SK-N-SH (cell line): ENCODE measurements at regions of chr10 and their contacts with region 1.

Region 1: DNA sequence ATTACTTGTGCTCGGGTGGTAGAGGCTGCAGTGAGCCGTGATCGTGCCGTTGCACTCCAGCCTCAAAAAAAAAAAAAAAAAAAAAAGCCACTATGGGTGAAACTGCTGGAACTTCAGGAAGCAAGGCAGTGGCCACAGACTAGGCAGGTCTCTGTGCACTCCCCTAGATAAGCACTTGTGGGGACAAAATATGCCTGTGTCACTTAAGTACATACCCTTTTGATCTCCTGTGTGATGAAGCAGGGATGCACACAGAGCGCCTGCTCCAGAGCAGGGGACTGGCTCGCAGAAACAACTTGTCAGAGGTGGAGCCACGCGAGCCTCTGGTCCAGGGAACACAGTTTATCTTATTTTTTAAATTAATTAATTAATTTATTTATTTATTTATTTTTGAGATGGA is 42.9 kb upstream of the PSAP start:
- DNase-seq: no peak
- H3K4me3 ChIP-seq: no peak overlapping the region
- H3K27ac ChIP-seq: no peak overlapping the region
- H3K4me1 ChIP-seq: peaks cover 0 to 3% of the 10 kb centered on the region in 2 experiments; a peak in 1 of 4 replicates
- H3K27me3 ChIP-seq: no peaks in the 10 kb centered on the region
- CTCF ChIP-seq: no peak
- EP300 ChIP-seq: no peak
- RAD21 ChIP-seq: no peak

Region 2: DNA sequence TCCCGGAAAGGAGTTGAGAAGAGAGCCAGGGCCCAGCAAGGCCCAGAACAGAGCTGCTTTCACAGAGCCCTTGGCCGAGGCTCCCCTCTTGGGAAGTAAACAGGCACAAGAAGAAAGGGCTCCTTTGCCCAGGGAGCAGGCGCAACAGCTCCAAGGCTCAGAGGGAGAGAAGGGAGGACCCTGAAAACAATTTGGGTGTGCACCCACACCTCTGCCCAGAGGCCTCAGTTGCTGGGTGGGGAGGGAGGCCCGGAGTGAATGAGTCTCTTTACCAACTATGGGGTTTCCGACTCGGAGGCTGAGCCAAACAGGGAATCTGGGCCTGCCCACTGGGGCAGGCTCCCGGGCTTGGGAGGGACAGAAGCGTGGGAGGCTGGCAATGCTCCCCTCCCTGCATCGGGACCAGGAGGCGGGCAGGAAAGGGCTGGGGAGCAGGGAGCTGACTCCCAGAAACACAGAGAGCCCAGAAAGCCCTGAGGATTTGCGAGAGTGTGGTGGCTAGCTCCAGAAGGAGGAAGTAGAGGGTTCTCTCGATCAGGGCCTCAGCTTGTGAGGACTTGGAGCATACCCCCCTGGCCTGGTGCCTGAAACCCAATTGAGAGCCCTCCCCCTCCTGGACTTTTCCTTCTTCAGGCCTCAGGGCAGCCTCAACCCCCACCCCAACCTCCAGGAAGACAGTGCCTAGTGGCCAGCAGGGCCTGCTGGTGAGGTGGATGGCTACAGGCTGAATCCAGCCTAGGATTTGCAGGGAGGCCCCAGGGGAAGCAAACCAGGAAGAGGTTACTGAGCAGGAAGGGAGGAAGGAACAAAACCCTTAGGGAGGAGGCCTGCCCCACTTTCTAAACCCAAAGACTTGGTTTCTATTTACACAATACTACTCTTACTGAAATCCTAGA is 180.5 kb before region 1 on chr10:
- CTCF ChIA-PET with region 1: interaction called, 24 read pairs
- POLR2A ChIA-PET with region 1: no interaction called
- DNase-seq: no peak
- H3K4me3 ChIP-seq: no peak overlapping the region
- H3K27ac ChIP-seq: no peak overlapping the region; a peak in 1 of 4 replicates
- H3K4me1 ChIP-seq: peaks cover 0 to 37% of the 10 kb centered on the region in 2 experiments; a peak in 1 of 4 replicates
- H3K27me3 ChIP-seq: no peaks in the 10 kb centered on the region; the same call in 1 of the 2 replicates
- CTCF ChIP-seq: no peak
- EP300 ChIP-seq: no peak
- RAD21 ChIP-seq: no peak

Region 3: DNA sequence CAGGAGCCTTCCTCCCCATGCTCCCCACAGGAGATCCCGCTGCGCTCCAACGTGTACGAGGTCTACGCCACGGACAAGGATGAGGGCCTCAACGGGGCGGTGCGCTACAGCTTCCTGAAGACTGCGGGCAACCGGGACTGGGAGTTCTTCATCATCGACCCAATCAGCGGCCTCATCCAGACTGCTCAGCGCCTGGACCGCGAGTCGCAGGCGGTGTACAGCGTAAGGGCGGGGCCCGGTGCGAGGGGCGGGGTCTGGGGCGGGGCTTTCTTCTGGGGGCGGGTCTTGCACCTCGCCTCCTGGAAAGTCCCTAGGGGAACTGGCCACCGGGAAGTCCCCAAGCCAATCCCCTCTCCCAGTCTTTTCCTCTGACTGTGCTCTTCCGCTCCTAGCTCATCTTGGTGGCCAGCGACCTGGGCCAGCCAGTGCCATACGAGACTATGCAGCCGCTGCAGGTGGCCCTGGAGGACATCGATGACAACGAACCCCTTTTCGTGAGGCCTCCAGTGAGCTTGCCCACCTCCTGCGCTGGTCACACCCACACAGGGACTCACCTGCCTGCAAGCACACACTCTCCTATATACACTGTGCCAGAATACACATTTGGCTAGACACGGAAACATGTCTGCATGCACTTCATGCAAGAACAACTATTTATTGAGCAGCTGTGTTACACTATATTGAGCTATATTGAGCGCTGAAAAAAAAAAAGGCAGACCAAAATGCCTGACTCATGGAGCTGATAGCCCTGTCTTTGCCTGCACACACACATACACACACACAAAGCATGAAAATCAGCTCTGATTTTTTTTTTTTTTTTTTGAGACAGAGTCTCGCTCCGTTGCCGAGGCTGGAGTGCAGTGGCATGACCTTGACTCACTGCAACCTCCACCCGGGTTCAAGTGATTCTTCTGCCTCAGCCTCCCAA is 87.9 kb before region 1 on chr10:
- CTCF ChIA-PET with region 1: interaction called, 36 read pairs
- POLR2A ChIA-PET with region 1: no interaction called
- DNase-seq: peak; percentile 51
- H3K4me3 ChIP-seq: no peak overlapping the region
- H3K27ac ChIP-seq: no peak overlapping the region
- H3K4me1 ChIP-seq: no peaks in the 10 kb centered on the region; a peak in 1 of 4 replicates
- H3K27me3 ChIP-seq: no peaks in the 10 kb centered on the region
- CTCF ChIP-seq: no peak
- EP300 ChIP-seq: no peak
- RAD21 ChIP-seq: no peak

Region 4: GRCh38 chr10:71850637-71851464 is 43.1 kb before region 1 on chr10 and contains the start of gene PSAP:
- CTCF ChIA-PET with region 1: interaction called, 11 read pairs
- POLR2A ChIA-PET with region 1: no interaction called
- DNase-seq: peak; percentile 99
- H3K4me3 ChIP-seq: peak within 1 kb of the TSS; percentile 87 to 96
- H3K27ac ChIP-seq: peak within 1 kb of the TSS; percentile 85 to 97
- H3K4me1 ChIP-seq: peaks cover 15 to 24% of the 10 kb centered on the region in 2 experiments; a peak in 3 of 4 replicates
- H3K27me3 ChIP-seq: no peaks in the 10 kb centered on the region
- CTCF ChIP-seq: no peak
- EP300 ChIP-seq: peak in 1 of 2 experiments; percentile 58; a peak in 1 of 4 replicates
- RAD21 ChIP-seq: 0 out of 2 replicates have a peak, but pooled peaks have one; percentile 3
- polyA plus RNA-seq, gene PSAP: 1,647 and 1,947 TPM in 2 replicates

Region 5: GRCh38 chr10:71957546-71958275 is 63.8 kb after region 1 on chr10:
- CTCF ChIA-PET with region 1: interaction called, 39 read pairs
- POLR2A ChIA-PET with region 1: no interaction called
- DNase-seq: no peak
- H3K4me3 ChIP-seq: no peak overlapping the region
- H3K27ac ChIP-seq: no peak overlapping the region
- H3K4me1 ChIP-seq: no peaks in the 10 kb centered on the region
- H3K27me3 ChIP-seq: no peaks in the 10 kb centered on the region
- CTCF ChIP-seq: peak; percentile 20; the same call in 1 of the 2 replicates
- EP300 ChIP-seq: no peak
- RAD21 ChIP-seq: 0 out of 2 replicates have a peak, but pooled peaks have one; percentile 4

Region 6: DNA sequence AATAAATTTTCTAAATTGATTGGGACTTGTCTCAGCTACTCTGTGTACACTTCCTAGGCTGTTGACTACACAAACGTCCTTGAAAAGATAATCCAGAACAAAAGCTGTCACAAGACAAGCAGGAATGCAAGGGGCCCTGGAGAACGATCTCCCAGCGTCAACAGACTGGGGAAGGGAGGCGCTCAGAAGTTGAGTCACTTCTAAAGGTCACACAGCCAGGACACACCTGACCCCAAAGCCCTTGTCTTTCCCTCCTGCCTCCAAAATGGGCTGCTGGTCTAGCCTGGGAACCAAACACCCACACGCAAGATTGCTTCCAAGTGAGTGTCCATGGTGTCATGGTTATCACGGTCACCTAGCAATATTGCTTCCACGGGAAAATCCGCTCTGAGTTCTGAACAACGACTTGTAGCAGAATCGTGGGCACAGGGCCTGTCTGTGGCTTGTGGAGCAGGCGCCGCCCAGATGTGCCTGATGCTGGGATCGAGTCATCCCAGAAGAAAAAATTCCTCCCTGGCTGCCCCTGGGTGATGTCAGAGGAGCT is 144.6 kb after region 1 on chr10:
- CTCF ChIA-PET with region 1: interaction called, 250 read pairs
- POLR2A ChIA-PET with region 1: no interaction called
- DNase-seq: no peak
- H3K4me3 ChIP-seq: no peak overlapping the region
- H3K27ac ChIP-seq: no peak overlapping the region
- H3K4me1 ChIP-seq: no peaks in the 10 kb centered on the region
- H3K27me3 ChIP-seq: no peaks in the 10 kb centered on the region
- CTCF ChIP-seq: no peak
- EP300 ChIP-seq: no peak
- RAD21 ChIP-seq: no peak